ENCODE measurements at regions of chr6 and their contacts with region 1.

Region 1: DNA sequence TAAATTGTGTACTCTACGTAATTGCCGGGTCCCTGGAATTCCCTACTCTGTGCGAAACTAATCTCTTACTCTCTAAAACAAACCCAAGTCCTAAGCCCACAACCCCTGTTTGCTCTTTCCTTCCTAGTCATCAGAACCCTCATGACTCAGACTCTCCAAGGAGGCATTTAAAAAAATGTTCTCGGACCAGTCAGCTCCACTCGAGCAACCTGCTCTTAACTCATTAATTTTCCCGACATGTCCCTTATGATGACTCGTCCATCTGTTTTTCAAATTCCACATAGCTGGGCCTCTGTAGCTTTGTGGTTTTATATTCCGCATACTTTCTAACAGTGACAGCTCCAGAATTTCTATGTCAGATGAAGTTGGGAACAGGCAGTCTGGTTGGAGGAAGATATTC is 2.6 kb upstream of the MUC22 start:
- DNase-seq: no peak
- ATAC-seq: peak in 2 of 4 donors; percentile 25 to 68
- H3K4me3 ChIP-seq: no peak overlapping the region
- H3K27ac ChIP-seq: no peak overlapping the region
- H3K4me1 ChIP-seq: peaks cover 0 to 19% (median 11%) of the 10 kb centered on the region in 12 donors
- H3K27me3 ChIP-seq: peaks cover 0 to 3% (median 0%) of the 10 kb centered on the region in 9 donors
- CTCF ChIP-seq: no peak
- POLR2A ChIP-seq: no peak

Region 2: GRCh38 chr6:30418448-30418847 is 589.2 kb before region 1 on chr6:
- intact Hi-C with region 1: no loop called
- DNase-seq: no peak
- ATAC-seq: no peak
- H3K4me3 ChIP-seq: no peak overlapping the region
- H3K27ac ChIP-seq: no peak overlapping the region
- H3K4me1 ChIP-seq: no peaks in the 10 kb centered on the region
- H3K27me3 ChIP-seq: peaks cover 0 to 56% (median 4%) of the 10 kb centered on the region in 9 donors
- CTCF ChIP-seq: no peak
- POLR2A ChIP-seq: no peak

Region 3: GRCh38 chr6:30942338-30943060 is 65.2 kb before region 1 on chr6:
- intact Hi-C with region 1: loop called in 1 of 10 experiments (anchors 10 kb)
- DNase-seq: peak in 4 of 5 donors; percentile 62 to 82 (median 72)
- ATAC-seq: peak; percentile 64 to 90 (median 82)
- H3K4me3 ChIP-seq: no peak overlapping the region
- H3K27ac ChIP-seq: no peak overlapping the region
- H3K4me1 ChIP-seq: peaks cover 0 to 10% (median 4%) of the 10 kb centered on the region in 12 donors
- H3K27me3 ChIP-seq: peaks cover 0 to 10% (median 0%) of the 10 kb centered on the region in 9 donors
- CTCF ChIP-seq: peak in 8 of 12 donors; percentile 23 to 53 (median 36)
- POLR2A ChIP-seq: no peak